Heart left ventricle (tissue), 16 donors: ENCODE measurements at regions of chr3 and their contacts with region 1.

Region 1: DNA sequence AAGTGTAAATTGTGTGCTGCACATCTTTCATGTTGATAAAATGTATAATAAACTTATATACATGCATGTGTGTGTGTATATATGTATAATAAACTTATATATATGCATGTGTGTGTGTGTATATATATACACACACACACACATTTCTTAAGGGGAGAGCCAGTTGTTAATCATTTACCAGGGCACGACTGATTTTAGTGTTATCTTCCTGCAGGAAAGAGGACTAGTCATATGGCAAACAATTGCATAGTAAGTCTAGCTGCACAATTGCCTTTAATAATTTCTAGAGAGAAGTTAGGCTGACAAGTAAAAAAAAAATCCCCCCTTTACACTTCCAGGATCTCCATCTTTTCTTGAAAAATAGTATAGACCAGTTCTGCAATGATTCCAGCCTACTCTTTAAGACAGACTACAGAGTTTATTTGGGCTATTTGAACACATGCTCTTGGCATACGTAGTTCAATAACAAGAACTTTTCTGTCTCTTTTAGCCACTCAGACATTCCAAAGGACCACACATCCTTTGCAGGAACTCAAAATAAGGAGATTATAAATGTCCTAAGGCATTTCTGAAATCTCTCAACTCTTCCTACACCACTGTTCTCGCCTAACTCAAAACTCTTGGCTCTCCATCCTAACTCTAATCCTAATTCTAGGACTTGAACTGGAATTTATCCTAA is 163.6 kb upstream of the SETMAR start:
- DNase-seq: no peak
- ATAC-seq: no peak
- H3K4me3 ChIP-seq: no peak overlapping the region
- H3K27ac ChIP-seq: no peak overlapping the region
- H3K4me1 ChIP-seq: no peaks in the 10 kb centered on the region
- H3K27me3 ChIP-seq: no peaks in the 10 kb centered on the region
- CTCF ChIP-seq: no peak
- POLR2A ChIP-seq: no peak

Region 2: GRCh38 chr3:4119119-4119518 is 20.5 kb before region 1 on chr3:
- intact Hi-C with region 1: loop called in 1 of 10 experiments (anchors 2 kb)
- DNase-seq: no peak
- ATAC-seq: no peak
- H3K4me3 ChIP-seq: no peak overlapping the region
- H3K27ac ChIP-seq: no peak overlapping the region
- H3K4me1 ChIP-seq: no peaks in the 10 kb centered on the region
- H3K27me3 ChIP-seq: no peaks in the 10 kb centered on the region
- CTCF ChIP-seq: no peak
- POLR2A ChIP-seq: no peak

Region 3: DNA sequence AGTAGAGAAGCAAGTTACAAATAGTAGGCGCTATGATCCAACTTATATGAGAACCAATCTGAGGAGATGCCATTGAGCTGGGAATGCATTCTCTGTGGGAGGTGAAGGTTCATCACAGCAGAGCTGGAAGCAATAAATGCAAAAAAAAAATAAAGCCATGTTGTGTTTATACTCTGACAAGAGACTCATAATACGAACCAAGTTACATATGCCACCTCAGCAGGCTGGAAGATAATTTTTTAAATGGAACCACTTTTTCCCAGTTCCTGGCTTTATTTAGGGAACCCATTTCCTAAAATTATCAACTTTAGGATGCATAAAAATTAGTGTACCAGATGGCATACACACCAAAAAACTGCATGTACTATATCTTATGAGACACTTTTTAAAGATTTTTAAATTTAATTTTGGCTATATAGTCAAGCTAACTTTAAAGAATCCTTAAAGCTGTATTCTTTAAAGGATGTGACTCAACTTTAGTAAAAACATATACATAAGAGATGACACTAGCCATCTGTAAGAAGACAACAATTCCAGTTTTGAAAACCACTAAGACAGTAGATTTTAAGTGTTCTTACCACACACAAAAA is 140.0 kb after region 1 on chr3:
- intact Hi-C with region 1: no loop called
- DNase-seq: no peak
- ATAC-seq: no peak
- H3K4me3 ChIP-seq: no peak overlapping the region
- H3K27ac ChIP-seq: no peak overlapping the region
- H3K4me1 ChIP-seq: no peaks in the 10 kb centered on the region
- H3K27me3 ChIP-seq: no peaks in the 10 kb centered on the region
- CTCF ChIP-seq: no peak
- POLR2A ChIP-seq: no peak

Region 4: GRCh38 chr3:5239602-5240001 is 1100.0 kb after region 1 on chr3:
- intact Hi-C with region 1: no loop called
- DNase-seq: no peak
- ATAC-seq: no peak
- H3K4me3 ChIP-seq: no peak overlapping the region
- H3K27ac ChIP-seq: no peak overlapping the region
- H3K4me1 ChIP-seq: no peaks in the 10 kb centered on the region
- H3K27me3 ChIP-seq: peaks cover 0 to 10% (median 0%) of the 10 kb centered on the region in 9 donors
- CTCF ChIP-seq: no peak
- POLR2A ChIP-seq: no peak